ENCODE measurements at regions of chr4 and their contacts with region 1.

Region 1: DNA sequence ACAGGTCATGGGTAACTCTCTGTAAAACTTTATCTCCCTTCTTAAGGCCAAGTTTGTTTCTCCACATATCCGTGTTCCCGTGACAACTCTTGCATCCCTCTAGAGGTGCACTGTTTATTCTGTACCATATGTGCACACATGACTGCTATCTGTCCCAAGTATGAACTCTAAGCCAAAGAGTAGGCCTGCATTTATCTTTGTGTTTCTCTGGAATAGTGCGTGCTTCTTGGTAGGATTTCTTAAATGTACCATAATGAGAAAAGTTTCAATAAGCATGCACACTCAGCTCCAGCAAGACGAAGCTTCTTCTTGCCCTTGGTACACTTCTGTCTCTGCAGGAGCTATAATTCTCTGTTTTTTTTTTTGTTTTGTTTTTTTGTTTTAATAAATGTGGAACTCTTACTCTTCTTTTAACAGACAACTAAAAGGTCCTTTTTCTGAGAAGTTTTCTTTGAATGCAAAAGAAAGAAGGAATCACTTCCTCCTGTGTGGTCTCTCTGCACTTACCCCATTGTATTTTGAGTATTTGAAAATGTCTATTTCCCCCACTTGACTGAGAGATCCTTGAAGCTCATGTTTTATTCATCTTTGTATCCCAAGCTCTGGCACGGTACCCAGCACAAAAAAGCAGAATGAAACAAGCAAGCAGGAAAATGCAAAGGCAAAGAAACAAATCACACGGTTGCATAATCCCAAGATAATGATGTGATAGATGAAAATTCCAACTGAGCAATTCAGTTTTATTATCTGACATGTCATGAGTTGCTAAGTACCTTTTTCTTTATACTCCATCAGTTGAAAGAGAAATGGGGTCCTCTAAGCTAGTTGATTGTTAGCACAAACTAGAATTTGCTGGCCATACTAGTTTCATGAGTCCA is 521.9 kb upstream of the BOD1L1 start:
- DNase-seq: no peak

Region 2: DNA sequence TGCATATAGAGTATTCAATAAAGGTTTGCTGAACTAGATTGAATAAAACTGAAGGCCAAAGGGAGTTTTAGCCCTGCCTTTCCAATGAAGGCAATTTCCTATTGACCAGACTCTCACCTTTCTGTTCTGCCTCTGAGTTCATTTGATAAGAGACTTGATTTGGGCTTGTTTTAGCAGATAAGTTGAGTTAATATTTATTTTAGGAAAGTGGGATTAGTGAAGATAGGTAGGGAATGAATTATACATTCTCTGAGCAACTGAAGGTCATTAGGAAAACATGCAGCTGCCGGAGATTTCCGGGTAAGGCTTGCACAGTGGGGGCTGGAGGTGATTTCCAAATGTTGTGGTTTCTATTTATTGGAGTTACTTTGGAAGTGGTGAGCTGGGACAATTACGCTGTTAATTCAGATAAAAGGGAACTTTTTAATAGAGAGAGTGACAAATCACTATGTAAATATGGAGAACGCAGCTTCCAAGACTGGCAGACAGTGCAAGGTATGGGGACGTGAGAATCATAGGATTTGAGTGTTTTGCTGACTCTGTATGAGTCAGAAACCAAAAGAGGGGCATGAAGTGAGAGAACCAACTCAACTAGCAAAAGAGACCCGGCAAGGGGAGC is 31.7 kb after region 1 on chr4:
- intact Hi-C with region 1: loop called in 1 of 2 experiments (anchors 2 kb)
- DNase-seq: no peak